Esophagus muscularis mucosa (tissue), 4 donors: ENCODE measurements at regions of chr12 and their contacts with region 1.

Region 1: GRCh38 chr12:1836849-1837421 is 16.6 kb downstream of the LRTM2 start:
- DNase-seq: no peak
- H3K4me3 ChIP-seq: no peak overlapping the region
- H3K27ac ChIP-seq: no peak overlapping the region
- H3K4me1 ChIP-seq: no peaks in the 10 kb centered on the region
- H3K27me3 ChIP-seq: peaks cover 0 to 45% (median under 1%) of the 10 kb centered on the region in 4 donors
- CTCF ChIP-seq: no peak
- EP300 ChIP-seq: no peak
- POLR2A ChIP-seq: no peak

Region 2: DNA sequence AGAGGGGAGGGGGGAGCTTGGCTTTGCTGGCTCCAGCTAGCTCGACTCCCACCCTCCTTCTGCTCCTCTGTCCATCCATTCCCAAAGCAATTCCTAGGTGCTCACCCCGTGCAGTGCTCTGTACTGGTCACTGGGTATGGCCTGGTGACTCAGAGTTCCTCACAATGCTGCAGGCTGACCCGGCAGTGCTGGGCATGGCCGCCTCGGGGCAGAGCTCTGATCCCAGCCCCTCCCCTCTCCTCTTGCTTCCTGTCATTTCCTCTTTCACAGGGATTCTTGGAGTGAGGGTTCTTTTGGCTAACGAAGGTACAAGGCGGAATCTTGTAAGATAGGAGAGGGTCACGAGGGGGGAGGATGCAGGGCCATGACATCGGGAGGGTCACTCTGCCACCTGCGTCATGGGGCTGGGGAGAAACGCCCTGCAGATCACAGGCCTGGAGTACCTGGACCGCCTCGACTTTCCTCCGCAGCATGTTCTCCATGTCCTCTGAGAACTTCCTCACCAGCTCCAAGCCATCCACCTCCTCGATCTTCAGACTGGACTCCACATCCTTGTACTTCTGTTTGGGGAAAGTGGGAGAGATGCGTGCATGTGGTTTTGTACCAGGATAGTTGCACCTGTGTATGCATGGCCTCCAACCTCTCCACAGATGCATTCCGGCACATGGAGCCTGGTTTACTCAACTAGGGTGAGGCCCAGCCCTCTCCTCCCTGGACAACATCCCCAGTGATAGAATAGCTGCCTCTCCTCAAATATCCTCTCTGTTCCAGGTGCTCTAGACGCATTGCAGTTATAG is 75.8 kb after region 1 on chr12:
- intact Hi-C with region 1: loop called (anchors 5 kb)
- DNase-seq: peak; percentile 90
- H3K4me3 ChIP-seq: no peak overlapping the region
- H3K27ac ChIP-seq: no peak overlapping the region
- H3K4me1 ChIP-seq: peaks cover 5 to 18% (median 16%) of the 10 kb centered on the region in 4 donors
- H3K27me3 ChIP-seq: peaks cover 0 to 24% (median 0%) of the 10 kb centered on the region in 4 donors
- CTCF ChIP-seq: no peak
- EP300 ChIP-seq: no peak
- POLR2A ChIP-seq: no peak

Region 3: DNA sequence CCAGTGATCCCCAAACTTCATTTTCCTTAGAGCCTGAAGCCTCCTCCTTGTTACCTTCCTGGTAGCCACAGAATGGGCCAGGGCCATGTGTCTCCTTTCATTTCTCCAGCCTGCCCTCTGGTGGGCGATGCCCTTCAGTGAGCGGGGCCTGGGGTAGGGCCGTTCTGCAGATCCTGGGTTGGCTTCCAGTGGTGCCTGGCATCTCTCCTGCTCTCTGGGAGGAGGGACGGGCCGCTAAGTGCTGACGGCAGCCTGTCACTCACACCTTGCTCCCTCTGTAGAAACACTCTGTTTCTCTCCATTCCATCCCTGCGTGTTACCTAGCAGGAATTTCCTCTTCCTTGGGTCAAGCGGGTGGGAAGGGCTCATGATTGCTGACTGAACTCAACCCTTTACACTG is 447.9 kb after region 1 on chr12:
- intact Hi-C with region 1: no loop called
- DNase-seq: no peak
- H3K4me3 ChIP-seq: no peak overlapping the region
- H3K27ac ChIP-seq: peak overlapping the region; percentile 71 to 80 (median 78)
- H3K4me1 ChIP-seq: peaks cover 76 to 80% (median 78%) of the 10 kb centered on the region in 4 donors
- H3K27me3 ChIP-seq: no peaks in the 10 kb centered on the region
- CTCF ChIP-seq: peak; percentile 58 to 69 (median 61)
- EP300 ChIP-seq: no peak
- POLR2A ChIP-seq: no peak

Region 4: GRCh38 chr12:2739817-2740641 is 903.1 kb after region 1 on chr12:
- intact Hi-C with region 1: no loop called
- DNase-seq: peak; percentile 45
- H3K4me3 ChIP-seq: no peak overlapping the region
- H3K27ac ChIP-seq: no peak overlapping the region
- H3K4me1 ChIP-seq: no peaks in the 10 kb centered on the region
- H3K27me3 ChIP-seq: peaks cover 0 to 11% (median 0%) of the 10 kb centered on the region in 4 donors
- CTCF ChIP-seq: peak; percentile 26 to 40 (median 39)
- EP300 ChIP-seq: no peak
- POLR2A ChIP-seq: no peak